ENCODE measurements at regions of chr22 and their contacts with region 1.

Region 1: GRCh38 chr22:33920927-33921524 is 750 bp upstream of the LARGE1 start:
- DNase-seq: peak; percentile 99
- H3K4me3 ChIP-seq: peak overlapping the region; percentile 60 to 99 (median 88)
- H3K27ac ChIP-seq: peak overlapping the region; percentile 86 to 94 (median 90)
- H3K4me1 ChIP-seq: peaks cover 3 to 45% (median 40%) of the 10 kb centered on the region in 4 donors
- H3K27me3 ChIP-seq: no peaks in the 10 kb centered on the region
- CTCF ChIP-seq: no peak
- EP300 ChIP-seq: no peak
- POLR2A ChIP-seq: no peak

Region 2: DNA sequence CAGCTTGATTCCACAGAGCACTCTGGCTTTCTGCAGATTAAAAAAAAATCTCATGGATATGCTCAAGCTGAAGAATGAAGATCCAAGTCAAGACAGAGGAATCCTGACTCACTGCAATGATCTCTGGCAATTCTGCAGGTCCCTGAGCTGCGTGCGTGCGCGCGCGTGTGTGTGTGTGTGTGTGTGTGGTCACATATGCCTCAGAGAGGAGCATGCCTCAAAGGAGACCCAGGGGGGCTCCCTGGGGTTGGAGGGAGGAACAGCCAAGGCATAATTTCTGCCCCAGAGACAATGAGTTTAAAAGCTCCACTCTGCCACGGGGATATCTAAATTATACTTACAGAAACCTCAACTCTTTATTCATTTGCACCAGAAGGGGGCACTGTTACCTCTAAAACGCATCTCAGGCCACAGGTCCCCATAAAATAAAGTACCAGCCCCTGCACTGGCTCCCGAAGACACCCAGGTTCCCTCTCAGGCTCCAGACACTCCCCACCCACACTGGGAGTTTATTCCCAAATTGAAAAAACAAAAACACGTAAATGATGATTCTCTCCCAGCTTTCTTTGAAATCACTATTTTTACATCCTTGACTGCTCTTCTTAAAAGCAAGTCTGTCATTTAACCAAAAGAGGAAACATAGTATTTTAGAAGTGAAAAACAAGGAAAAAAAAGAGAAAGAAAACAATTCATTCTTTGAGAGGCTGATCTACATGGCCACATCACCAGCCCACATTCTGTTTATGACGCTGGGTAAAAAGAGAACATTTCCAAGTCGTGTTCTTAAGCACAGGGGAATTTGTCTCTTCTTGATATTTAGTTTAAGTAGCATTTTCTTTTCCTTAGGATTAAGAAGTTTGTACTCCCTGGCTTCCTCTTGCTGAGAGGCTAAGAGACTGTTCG is 401.7 kb before region 1 on chr22:
- intact Hi-C with region 1: loop called (anchors 1 kb)
- DNase-seq: no peak
- H3K4me3 ChIP-seq: no peak overlapping the region
- H3K27ac ChIP-seq: peak overlapping the region in 2 of 4 donors; percentile 18 to 27
- H3K4me1 ChIP-seq: peaks cover 0 to 19% (median 10%) of the 10 kb centered on the region in 4 donors
- H3K27me3 ChIP-seq: no peaks in the 10 kb centered on the region
- CTCF ChIP-seq: peak; percentile 63 to 64 (median 63)
- EP300 ChIP-seq: no peak
- POLR2A ChIP-seq: no peak

Region 3: DNA sequence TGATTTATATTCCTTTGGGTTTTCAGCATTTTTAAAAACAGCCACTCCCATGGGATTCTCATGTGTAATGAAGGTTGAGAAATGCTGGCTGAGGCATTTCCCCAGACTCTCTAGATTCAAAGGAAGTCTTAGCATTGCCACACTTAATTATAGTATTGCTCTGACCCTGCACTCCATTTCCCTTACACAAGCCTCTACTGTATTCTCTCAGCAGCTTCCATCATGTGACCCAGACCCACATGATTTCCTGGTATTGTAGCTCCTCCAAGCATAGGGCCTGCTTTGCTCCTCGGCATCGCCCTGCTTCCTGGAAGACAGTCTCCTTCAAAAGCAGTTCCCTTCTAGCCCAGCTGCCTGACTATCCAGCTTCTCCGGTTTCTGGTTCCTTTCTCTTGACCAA is 262.3 kb before region 1 on chr22:
- intact Hi-C with region 1: loop called (anchors 5 kb)
- DNase-seq: peak; percentile 81
- H3K4me3 ChIP-seq: no peak overlapping the region
- H3K27ac ChIP-seq: peak overlapping the region; percentile 46 to 72 (median 56)
- H3K4me1 ChIP-seq: peaks cover 0 to 50% (median 34%) of the 10 kb centered on the region in 4 donors
- H3K27me3 ChIP-seq: no peaks in the 10 kb centered on the region
- CTCF ChIP-seq: no peak
- EP300 ChIP-seq: peak in 1 of 4 donors; percentile 8
- POLR2A ChIP-seq: no peak

Region 4: DNA sequence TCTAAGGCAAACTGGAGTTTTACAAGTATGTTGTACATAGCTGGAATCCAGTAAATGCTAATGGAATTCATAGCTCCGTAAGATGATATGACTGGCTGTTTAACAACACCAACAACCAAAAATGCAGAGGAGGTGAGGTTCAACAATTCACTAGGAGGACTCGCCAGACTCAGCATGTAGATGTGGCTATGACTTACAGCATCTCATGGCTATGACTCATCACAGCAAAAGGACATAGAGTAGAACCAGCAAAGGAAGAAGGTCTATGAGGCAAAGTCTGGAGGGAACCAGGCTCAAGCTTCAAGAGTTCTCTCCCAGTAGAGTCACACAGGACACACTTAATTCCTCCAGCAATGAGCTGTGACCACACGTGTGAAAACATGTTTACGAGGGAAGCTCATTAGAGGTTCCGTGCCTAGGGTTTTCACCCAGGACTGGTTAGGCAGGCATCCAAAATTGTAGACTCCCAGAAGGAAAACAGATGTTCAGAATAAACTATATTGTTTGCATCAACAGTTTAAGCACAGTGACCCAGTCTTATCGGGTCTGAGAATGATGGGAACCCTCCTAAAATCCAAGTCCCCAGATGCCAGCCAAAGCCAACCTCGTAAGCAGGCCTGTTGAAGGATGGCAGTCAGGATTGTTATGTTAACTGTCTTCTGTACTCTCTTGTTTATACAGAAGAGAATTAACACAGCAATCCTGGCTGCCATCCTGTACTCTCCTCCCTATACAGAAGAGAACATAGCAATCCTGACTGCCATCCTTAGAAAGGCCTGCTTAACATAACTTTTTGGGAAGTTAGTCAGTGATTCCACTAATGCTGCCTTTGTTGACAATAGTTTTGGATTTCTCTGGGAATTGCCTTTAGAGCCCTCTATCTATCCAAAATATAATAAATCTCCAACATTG is 117.4 kb before region 1 on chr22:
- intact Hi-C with region 1: loop called (anchors 5 kb)
- DNase-seq: peak; percentile 71
- H3K4me3 ChIP-seq: no peak overlapping the region
- H3K27ac ChIP-seq: peak overlapping the region; percentile 54 to 87 (median 79)
- H3K4me1 ChIP-seq: peaks cover 0 to 70% (median 69%) of the 10 kb centered on the region in 4 donors
- H3K27me3 ChIP-seq: no peaks in the 10 kb centered on the region
- CTCF ChIP-seq: no peak
- EP300 ChIP-seq: peak; percentile 31 to 80 (median 58)
- POLR2A ChIP-seq: no peak